Calu3 (cell line): ENCODE measurements at regions of chr2 and their contacts with region 1.

Region 1: GRCh38 chr2:209960676-209961630 is 41.5 kb upstream of the RPE start:
- DNase-seq: peak; percentile 60
- H3K4me3 Mint-ChIP-seq: no peak overlapping the region
- H3K27ac Mint-ChIP-seq: no peak overlapping the region
- H3K4me1 Mint-ChIP-seq: peaks cover 9% of the 10 kb centered on the region
- H3K27me3 Mint-ChIP-seq: no peaks in the 10 kb centered on the region
- CTCF ChIP-seq: peak; percentile 67

Region 2: GRCh38 chr2:209423562-209424198 is 537.3 kb before region 1 on chr2 and contains the start of gene MAP2:
- CTCF ChIA-PET with region 1: interaction called, 14 read pairs
- intact Hi-C with region 1: loop called (anchors 1 kb)
- DNase-seq: peak; percentile 95
- H3K4me3 Mint-ChIP-seq: peak within 1 kb of the TSS; percentile 94
- H3K27ac Mint-ChIP-seq: peak within 1 kb of the TSS; percentile 84
- H3K4me1 Mint-ChIP-seq: peaks cover 35% of the 10 kb centered on the region
- H3K27me3 Mint-ChIP-seq: no peaks in the 10 kb centered on the region
- CTCF ChIP-seq: peak; percentile 98
- total RNA-seq, gene MAP2: 9.5 and 11.2 TPM in 2 replicates

Region 3: GRCh38 chr2:209719034-209719433 is 241.9 kb before region 1 on chr2:
- CTCF ChIA-PET with region 1: no interaction called
- intact Hi-C with region 1: loop called (anchors 5 kb)
- DNase-seq: no peak
- H3K4me3 Mint-ChIP-seq: no peak overlapping the region
- H3K27ac Mint-ChIP-seq: no peak overlapping the region
- H3K4me1 Mint-ChIP-seq: no peaks in the 10 kb centered on the region
- H3K27me3 Mint-ChIP-seq: no peaks in the 10 kb centered on the region
- CTCF ChIP-seq: no peak

Region 4: GRCh38 chr2:209933499-209934483 is 27.2 kb before region 1 on chr2:
- CTCF ChIA-PET with region 1: interaction called, 9 read pairs
- intact Hi-C with region 1: loop called (anchors 1 kb)
- DNase-seq: peak; percentile 11
- H3K4me3 Mint-ChIP-seq: peak overlapping the region; percentile 26
- H3K27ac Mint-ChIP-seq: peak overlapping the region; percentile 57
- H3K4me1 Mint-ChIP-seq: peaks cover 23% of the 10 kb centered on the region
- H3K27me3 Mint-ChIP-seq: no peaks in the 10 kb centered on the region
- CTCF ChIP-seq: no peak

Region 5: GRCh38 chr2:211035548-211036185 is 1074.7 kb after region 1 on chr2:
- CTCF ChIA-PET with region 1: no interaction called
- intact Hi-C with region 1: no loop called
- DNase-seq: peak; percentile 26
- H3K4me3 Mint-ChIP-seq: no peak overlapping the region
- H3K27ac Mint-ChIP-seq: no peak overlapping the region
- H3K4me1 Mint-ChIP-seq: peaks cover 10% of the 10 kb centered on the region
- H3K27me3 Mint-ChIP-seq: no peaks in the 10 kb centered on the region
- CTCF ChIP-seq: peak; percentile 49